Ovary (tissue), 10 donors: ENCODE measurements at regions of chr5 and their contacts with region 1.

Region 1: DNA sequence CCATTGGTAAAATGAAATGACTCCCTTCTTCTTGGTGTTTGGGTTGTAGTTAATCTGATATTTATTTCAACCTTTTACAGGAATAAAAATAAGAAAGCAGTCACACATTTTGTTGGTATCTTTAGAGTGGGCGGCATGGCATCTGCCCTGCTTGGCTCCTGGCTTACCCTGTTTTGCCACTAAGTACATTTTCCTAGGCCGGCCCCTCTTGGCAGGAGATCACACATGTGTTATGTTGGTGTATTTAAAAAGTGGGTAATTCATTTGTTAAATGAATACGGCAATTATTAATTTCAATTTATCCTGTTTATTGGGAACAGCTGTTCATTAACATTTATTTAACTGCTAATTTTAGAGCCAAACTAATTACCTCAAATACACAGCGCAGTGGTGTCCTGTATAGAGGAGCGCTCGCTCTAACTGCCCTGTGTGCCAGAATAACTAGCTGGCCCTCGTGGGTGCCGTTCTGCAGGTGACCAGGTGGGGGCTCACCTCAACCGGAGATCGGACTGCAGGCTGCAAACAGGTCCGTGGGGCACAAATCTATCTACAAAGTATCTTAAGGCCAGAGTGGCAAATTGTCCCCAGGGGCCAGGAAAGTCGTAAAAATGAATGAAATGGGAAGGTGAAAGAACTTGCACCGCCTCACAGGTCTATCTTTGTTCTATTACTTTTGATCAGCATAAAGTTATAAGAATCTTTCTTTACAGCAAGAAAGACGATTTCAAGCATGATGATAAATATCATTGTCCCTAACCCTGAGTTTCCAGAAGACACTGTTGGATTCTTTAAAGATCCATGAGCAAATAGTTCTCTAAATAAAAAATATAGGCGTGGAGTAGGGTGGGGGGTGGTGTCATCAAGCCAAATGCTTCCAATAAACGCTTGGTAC is 26.2 kb upstream of the GPR151 start:
- DNase-seq: peak; percentile 16 to 65 (median 50)
- H3K4me3 ChIP-seq: no peak overlapping the region
- H3K27ac ChIP-seq: no peak overlapping the region
- H3K4me1 ChIP-seq: peaks cover 2% of the 10 kb centered on the region
- H3K27me3 ChIP-seq: no peaks in the 10 kb centered on the region
- CTCF ChIP-seq: peak in 2 of 3 donors; percentile 25 to 31
- EP300 ChIP-seq: no peak
- POLR2A ChIP-seq: no peak

Region 2: DNA sequence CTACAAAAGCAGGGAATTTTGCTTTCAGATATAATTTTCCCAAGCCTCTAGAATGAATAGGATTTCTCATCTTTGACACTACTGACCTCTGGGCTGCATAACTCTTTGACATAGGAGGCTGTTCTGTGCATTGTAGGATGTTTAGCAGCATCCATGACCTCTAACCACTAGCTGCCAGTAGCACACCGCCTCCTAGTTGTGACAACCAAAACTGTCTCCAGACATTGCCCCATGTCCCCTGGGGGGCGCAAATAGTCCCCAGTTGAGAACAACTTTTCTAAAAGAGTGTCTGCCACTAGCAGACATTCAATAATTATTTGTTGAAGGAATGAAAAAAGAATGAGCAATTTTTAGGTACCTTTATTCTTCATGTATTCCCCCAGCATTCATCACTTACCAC is 151.7 kb before region 1 on chr5:
- intact Hi-C with region 1: no loop called
- DNase-seq: no peak
- H3K4me3 ChIP-seq: no peak overlapping the region
- H3K27ac ChIP-seq: no peak overlapping the region
- H3K4me1 ChIP-seq: no peaks in the 10 kb centered on the region
- H3K27me3 ChIP-seq: no peaks in the 10 kb centered on the region
- CTCF ChIP-seq: no peak
- EP300 ChIP-seq: no peak
- POLR2A ChIP-seq: no peak

Region 3: GRCh38 chr5:146965761-146966659 is 423.8 kb after region 1 on chr5:
- intact Hi-C with region 1: loop called in 2 of 4 experiments (anchors 1 to 5 kb)
- DNase-seq: peak in 3 of 5 donors; percentile 11 to 41 (median 22)
- H3K4me3 ChIP-seq: no peak overlapping the region
- H3K27ac ChIP-seq: no peak overlapping the region
- H3K4me1 ChIP-seq: peaks cover 4% of the 10 kb centered on the region
- H3K27me3 ChIP-seq: no peaks in the 10 kb centered on the region
- CTCF ChIP-seq: peak in 2 of 3 donors; percentile 29 to 46
- EP300 ChIP-seq: no peak
- POLR2A ChIP-seq: no peak

Region 4: DNA sequence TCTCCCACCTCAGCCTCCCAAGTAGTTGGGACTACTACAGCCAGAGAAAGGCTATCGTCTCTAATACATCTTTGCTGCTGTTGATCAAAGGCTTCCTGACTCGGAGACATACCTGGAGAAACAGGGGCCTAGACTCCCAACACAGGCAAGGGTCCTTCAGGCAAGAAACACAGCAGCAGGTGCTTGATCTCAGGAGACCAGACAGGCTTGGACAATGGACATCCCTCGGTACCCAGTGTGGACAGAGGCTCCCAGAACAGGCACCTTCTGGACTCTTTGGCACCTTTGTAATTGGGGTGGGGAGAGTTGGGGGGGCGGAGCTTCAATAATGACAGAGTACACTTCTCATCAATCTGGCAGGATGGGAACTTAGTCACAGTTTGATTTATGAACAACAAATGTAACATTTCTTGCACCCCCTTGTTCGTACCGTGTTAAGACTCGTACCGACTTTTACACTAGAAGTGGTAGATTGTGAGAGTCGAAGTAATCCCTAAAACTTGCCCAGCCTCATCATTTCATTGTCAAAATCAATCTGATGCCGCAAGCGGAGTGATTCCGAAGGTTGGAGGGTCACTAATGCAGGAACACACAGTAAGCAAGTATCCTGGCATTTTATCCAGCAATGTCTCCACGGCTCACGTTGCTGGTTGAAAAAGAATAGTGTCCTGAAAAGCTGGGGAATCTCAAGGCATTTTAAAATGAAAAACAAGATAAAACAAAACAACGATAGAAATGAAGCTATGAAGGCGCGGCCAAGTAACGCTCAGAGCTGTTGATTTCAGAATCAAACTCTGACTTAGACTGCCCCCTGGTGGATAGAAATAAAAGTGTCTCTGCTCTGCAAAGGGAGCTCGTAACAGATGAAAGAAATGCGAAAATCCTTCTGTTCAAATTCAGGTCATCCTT is 646.2 kb after region 1 on chr5:
- intact Hi-C with region 1: loop called in 2 of 4 experiments (anchors 10 kb)
- DNase-seq: peak; percentile 28 to 57 (median 35)
- H3K4me3 ChIP-seq: no peak overlapping the region
- H3K27ac ChIP-seq: no peak overlapping the region
- H3K4me1 ChIP-seq: no peaks in the 10 kb centered on the region
- H3K27me3 ChIP-seq: no peaks in the 10 kb centered on the region
- CTCF ChIP-seq: peak; percentile 52 to 79 (median 69)
- EP300 ChIP-seq: no peak
- POLR2A ChIP-seq: no peak